Common myeloid progenitor, CD34-positive (primary cell): ENCODE measurements at regions of chr6 and their contacts with region 1.

Region 1: DNA sequence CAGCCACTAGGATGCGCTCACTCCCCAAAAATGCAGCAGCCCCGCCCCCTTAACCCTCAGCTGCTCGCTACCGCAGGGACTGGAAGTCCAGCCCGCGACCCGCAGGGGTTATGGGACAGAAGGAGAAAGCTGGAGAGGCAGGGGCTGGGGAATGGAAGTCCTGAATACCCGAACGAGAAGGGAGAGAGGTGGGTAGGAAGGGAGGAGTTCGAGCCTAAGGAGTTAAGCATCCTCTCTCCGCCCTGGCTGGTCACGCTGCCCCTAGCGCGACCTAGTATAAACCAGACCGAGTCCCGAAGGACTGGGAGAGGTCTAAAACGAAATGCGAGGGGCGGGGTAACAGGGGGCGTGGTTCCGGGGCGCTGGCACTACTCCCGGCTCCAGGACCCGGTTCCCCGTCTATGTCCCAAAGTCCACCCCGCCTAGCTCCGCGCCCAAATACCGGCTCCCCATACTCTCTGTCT is 448 bp upstream of the DDAH2 start:
- DNase-seq: peak; percentile 88 to 91 (median 91)
- H3K4me3 ChIP-seq: peak overlapping the region; percentile 81 to 100 (median 95)
- H3K27ac ChIP-seq: peak overlapping the region; percentile 62 to 88
- H3K4me1 ChIP-seq: peaks cover 20 to 78% (median 67%) of the 10 kb centered on the region in 4 experiments
- H3K27me3 ChIP-seq: no peaks in the 10 kb centered on the region

Region 2: GRCh38 chr6:31597006-31597405 is 132.5 kb before region 1 on chr6:
- CTCF ChIA-PET with region 1: no interaction called
- POLR2A ChIA-PET with region 1: no interaction called
- DNase-seq: peak; percentile 77 to 84 (median 78)
- H3K4me3 ChIP-seq: no peak overlapping the region
- H3K27ac ChIP-seq: no peak overlapping the region
- H3K4me1 ChIP-seq: peaks cover 0 to 40% (median 21%) of the 10 kb centered on the region in 4 experiments
- H3K27me3 ChIP-seq: no peaks in the 10 kb centered on the region

Region 3: DNA sequence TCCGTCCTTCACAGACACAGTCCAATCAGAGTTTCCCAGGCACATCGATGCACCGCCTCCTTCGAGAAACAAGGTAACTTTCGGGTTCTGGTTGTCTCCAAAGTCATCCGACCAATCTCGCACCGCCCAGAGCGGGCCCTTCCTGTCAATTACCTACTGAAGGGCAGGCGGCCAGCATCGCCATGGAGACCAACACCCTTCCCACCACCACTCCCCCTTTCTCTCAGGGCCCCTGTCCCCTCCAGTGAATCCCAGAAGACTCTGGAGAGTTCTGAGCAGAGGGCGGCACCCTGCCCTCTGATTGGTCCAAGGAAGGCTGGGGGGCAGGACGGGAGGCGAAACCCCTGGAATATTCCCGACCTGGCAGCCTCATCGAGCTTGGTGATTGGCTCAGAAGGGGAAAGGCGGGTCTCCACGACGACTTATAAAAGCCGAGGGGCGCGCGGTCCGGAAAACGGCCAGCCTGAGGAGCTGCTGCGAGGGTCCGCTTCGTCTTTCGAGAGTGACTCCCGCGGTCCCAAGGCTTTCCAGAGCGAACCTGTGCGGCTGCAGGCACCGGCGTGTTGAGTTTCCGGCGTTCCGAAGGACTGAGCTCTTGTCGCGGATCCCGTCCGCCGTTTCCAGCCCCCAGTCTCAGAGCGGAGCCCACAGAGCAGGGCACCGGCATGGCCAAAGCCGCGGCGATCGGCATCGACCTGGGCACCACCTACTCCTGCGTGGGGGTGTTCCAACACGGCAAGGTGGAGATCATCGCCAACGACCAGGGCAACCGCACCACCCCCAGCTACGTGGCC is 97.9 kb after region 1 on chr6 and contains the start of gene HSPA1B:
- CTCF ChIA-PET with region 1: interaction called, 10 read pairs
- POLR2A ChIA-PET with region 1: interaction called, 12 read pairs
- DNase-seq: peak; percentile 100
- H3K4me3 ChIP-seq: peak within 1 kb of the TSS; percentile 72 to 94 (median 83)
- H3K27ac ChIP-seq: peak within 1 kb of the TSS; percentile 88 to 96
- H3K4me1 ChIP-seq: peaks cover 19 to 58% (median 42%) of the 10 kb centered on the region in 4 experiments
- H3K27me3 ChIP-seq: no peaks in the 10 kb centered on the region